ENCODE measurements at regions of chr11 and their contacts with region 1.

Region 1: DNA sequence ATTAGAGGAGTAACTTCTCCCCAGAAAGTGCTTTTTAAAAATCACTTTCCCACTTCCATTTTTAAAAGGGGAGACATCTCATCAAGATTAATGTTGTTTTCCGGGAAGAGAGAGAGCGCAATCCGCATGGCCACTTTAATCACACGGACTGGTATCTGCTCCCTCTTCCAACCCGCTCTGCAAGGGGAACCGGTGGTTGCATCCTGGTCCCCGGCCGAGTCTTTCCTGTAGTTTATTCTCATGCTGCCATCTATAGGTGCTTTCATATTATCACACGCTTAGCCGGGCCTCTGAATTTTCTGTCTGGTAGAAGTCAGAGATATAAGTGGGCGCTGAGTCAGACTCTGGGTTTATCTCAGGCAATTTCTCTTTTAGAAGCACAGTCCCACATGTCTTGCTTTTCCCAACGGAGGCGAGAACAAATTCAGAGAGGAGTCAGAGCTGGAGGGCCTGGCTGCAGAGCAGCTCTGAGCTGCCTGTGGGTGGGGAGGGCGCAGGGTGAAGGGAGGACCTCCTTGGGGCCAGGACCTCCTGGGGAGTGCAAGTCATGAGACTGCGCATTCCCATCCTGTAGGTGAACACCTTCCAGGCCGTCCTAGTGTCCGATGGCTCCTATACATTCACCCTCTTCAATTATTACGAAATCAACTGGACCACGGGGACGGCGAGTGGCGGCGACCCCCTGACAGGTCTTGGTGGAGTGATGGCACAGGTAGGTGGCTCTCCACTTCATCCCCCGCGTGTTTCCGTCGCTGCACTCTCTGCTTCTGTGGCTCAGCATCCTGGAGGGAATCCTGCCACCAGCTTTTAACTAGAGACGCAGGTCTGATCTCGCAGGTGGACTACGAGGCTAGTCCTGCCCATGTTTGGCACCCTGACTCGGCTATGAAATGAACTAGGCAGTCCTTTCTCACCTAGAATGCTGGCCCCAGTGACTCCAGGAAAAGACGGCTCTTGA is 11.7 kb downstream of the TECTA start:
- DNase-seq: peak; percentile 48 to 69
- ATAC-seq: peak; percentile 83 to 95 (median 90)
- H3K4me3 ChIP-seq: no peak overlapping the region
- H3K27ac ChIP-seq: no peak overlapping the region
- H3K4me1 ChIP-seq: peaks cover 0 to 19% (median 7%) of the 10 kb centered on the region in 9 donors
- H3K27me3 ChIP-seq: peaks cover 0 to 21% (median 0%) of the 10 kb centered on the region in 7 donors
- CTCF ChIP-seq: peak; percentile 37 to 76 (median 66)

Region 2: DNA sequence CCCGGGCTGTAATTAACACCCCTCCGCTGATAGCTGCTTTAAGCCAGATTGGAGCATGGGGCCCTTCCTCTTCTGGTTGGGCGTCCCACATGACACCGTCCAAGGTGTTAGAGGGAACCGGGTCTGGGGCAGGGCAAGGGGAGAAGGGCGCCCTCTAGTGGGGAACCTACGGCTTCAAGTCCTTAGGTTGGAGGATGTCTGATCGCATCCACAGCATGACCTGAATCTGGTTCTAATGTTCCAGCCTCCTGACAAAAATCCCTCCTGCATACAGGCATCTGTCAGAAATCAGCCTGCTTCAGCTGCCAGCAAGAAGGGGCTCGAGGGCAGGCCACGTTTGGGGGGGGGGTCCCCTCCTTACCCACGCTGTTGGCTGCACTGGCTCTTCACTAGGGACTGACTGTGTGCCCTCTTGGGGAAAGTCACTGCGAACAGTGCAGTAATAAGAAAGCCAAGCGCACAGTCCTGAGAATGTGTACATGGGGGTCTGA is 183.1 kb before region 1 on chr11:
- intact Hi-C with region 1: loop called in 3 of 10 experiments (anchors 5 to 10 kb)
- DNase-seq: peak in 1 of 2 donors; percentile 42
- ATAC-seq: peak; percentile 31 to 85 (median 73)
- H3K4me3 ChIP-seq: no peak overlapping the region
- H3K27ac ChIP-seq: no peak overlapping the region
- H3K4me1 ChIP-seq: no peaks in the 10 kb centered on the region
- H3K27me3 ChIP-seq: peaks cover 0 to 24% (median 5%) of the 10 kb centered on the region in 7 donors
- CTCF ChIP-seq: peak; percentile 21 to 69 (median 51)

Region 3: GRCh38 chr11:120936356-120936755 is 176.4 kb before region 1 on chr11:
- intact Hi-C with region 1: loop called in 5 of 10 experiments (anchors 5 to 10 kb)
- DNase-seq: no peak
- ATAC-seq: no peak
- H3K4me3 ChIP-seq: no peak overlapping the region
- H3K27ac ChIP-seq: no peak overlapping the region
- H3K4me1 ChIP-seq: no peaks in the 10 kb centered on the region
- H3K27me3 ChIP-seq: peaks cover 0 to 77% (median 18%) of the 10 kb centered on the region in 7 donors
- CTCF ChIP-seq: no peak

Region 4: DNA sequence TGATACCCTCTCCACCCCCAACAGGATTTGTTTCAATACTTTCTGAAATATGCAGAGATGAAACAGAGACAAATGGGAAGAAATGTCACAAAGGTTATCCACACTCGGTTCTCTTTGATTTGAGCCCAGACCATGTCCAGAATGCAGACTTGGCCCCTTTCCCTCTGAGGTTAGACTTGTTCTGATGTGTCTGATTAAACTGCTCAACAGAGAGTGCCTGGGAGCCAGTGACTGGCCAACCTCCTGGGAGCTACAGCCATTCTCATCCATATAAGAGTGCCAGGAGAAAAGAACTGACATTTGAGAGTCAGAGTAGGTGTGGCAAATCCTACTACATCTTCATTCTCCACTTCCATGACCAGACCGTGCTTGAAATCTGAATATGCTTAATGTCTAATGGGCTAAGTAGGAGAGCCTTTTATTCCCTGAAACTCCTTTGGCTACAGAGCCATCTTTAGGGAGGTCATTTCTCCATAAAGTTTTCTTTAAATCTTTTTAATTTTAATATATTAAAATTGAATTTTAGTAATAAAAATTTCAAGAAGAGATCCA is 801.8 kb after region 1 on chr11:
- intact Hi-C with region 1: no loop called
- DNase-seq: no peak
- ATAC-seq: no peak
- H3K4me3 ChIP-seq: no peak overlapping the region
- H3K27ac ChIP-seq: no peak overlapping the region
- H3K4me1 ChIP-seq: no peaks in the 10 kb centered on the region
- H3K27me3 ChIP-seq: no peaks in the 10 kb centered on the region
- CTCF ChIP-seq: no peak

Measured in heart right ventricle (tissue), 16 donors.